ENCODE measurements at regions of chr6 and their contacts with region 1.

Region 1: DNA sequence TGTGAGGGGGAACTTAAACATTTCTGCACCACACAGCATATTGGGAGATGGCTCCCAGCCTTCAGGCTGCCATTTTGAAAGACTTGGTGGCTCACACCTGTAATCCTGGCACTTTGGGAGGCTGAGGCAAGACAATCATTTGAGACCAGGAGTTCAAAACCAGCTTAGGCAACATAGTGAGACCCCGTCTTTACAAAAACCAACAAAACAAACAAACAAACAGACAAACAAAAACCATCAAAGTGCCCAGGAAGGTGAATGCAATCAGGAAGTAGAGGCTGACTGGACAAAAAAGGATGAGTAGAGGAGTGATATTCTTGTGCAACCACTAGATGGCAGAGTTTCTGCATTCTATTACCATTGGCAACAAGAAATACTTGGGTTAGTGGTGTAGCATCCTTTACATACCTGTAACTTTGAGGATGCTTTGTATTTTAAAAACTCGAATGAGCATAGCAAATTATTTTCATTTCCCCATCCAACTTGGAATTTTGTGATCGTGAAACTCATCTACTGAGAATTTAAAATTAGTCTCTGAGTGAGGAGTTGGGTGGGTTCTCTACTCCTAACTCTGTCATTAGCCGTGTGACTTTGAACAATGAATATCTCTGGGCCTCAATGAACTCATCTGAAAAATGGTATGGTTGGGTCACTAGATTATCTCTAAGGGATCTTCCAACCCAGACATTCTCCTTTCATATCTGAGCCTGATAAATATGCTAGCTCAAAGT is 84.4 kb downstream of the CRYBG1 start:
- DNase-seq: peak; percentile 70
- ATAC-seq: no peak
- H3K4me3 ChIP-seq: no peak overlapping the region
- H3K27ac ChIP-seq: no peak overlapping the region
- H3K4me1 ChIP-seq: peaks cover 32% of the 10 kb centered on the region
- H3K27me3 ChIP-seq: no peaks in the 10 kb centered on the region
- CTCF ChIP-seq: peak; percentile 71

Region 2: GRCh38 chr6:105691081-105691480 is 753.9 kb before region 1 on chr6:
- CTCF ChIA-PET with region 1: no interaction called
- POLR2A ChIA-PET with region 1: no interaction called
- intact Hi-C with region 1: no loop called
- DNase-seq: no peak
- ATAC-seq: no peak
- H3K4me3 ChIP-seq: no peak overlapping the region
- H3K27ac ChIP-seq: no peak overlapping the region
- H3K4me1 ChIP-seq: no peaks in the 10 kb centered on the region
- H3K27me3 ChIP-seq: no peaks in the 10 kb centered on the region
- CTCF ChIP-seq: no peak

Region 3: GRCh38 chr6:105992315-105992961 is 452.5 kb before region 1 on chr6:
- CTCF ChIA-PET with region 1: no interaction called
- POLR2A ChIA-PET with region 1: no interaction called
- intact Hi-C with region 1: no loop called
- DNase-seq: peak; percentile 72
- ATAC-seq: peak; percentile 93
- H3K4me3 ChIP-seq: peak overlapping the region; percentile 85
- H3K27ac ChIP-seq: no peak overlapping the region
- H3K4me1 ChIP-seq: 0 out of 2 replicates have a peak, but pooled peaks cover 14% of the 10 kb centered on the region
- H3K27me3 ChIP-seq: no peaks in the 10 kb centered on the region
- CTCF ChIP-seq: no peak

Region 4: GRCh38 chr6:106360410-106360988 is 84.4 kb before region 1 on chr6 and contains the start of gene CRYBG1:
- CTCF ChIA-PET with region 1: interaction called, 5 read pairs
- POLR2A ChIA-PET with region 1: no interaction called
- intact Hi-C with region 1: loop called (anchors 1 kb)
- DNase-seq: peak; percentile 90
- ATAC-seq: peak; percentile 85
- H3K4me3 ChIP-seq: peak within 1 kb of the TSS; percentile 70
- H3K27ac ChIP-seq: peak within 1 kb of the TSS; percentile 42
- H3K4me1 ChIP-seq: peaks cover 20% of the 10 kb centered on the region
- H3K27me3 ChIP-seq: no peaks in the 10 kb centered on the region
- CTCF ChIP-seq: peak; percentile 82
- total RNA-seq, gene CRYBG1: 19.9 and 22.2 TPM in 2 replicates

Region 5: DNA sequence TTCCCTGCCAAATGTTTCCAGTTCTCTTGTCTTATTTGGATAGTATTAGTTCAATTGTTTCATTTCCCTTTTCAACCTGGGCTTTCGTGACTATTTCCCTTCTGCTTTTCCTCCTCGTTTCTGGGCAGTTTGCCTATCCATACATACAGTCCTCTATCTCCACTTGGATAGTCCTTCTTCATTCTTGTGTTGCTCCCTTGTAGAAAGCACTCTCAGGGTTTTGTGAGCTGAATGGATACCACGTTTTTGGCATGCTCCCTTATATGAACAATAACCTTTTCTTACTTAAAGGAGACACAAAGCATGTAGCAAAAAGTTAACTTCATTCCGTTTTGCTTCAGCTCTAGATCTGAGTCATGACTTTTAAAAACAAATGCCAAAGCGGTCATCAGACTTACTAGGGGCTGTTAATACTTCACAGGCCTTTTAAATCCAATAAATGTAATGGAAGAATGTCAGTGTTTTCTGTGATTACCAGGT is 67.8 kb before region 1 on chr6:
- CTCF ChIA-PET with region 1: interaction called, 4 read pairs
- POLR2A ChIA-PET with region 1: no interaction called
- intact Hi-C with region 1: loop called (anchors 1 kb)
- DNase-seq: peak; percentile 75
- ATAC-seq: peak; percentile 40
- H3K4me3 ChIP-seq: peak overlapping the region; percentile 38
- H3K27ac ChIP-seq: peak overlapping the region; percentile 64
- H3K4me1 ChIP-seq: peaks cover 52% of the 10 kb centered on the region
- H3K27me3 ChIP-seq: no peaks in the 10 kb centered on the region
- CTCF ChIP-seq: no peak

Region 6: DNA sequence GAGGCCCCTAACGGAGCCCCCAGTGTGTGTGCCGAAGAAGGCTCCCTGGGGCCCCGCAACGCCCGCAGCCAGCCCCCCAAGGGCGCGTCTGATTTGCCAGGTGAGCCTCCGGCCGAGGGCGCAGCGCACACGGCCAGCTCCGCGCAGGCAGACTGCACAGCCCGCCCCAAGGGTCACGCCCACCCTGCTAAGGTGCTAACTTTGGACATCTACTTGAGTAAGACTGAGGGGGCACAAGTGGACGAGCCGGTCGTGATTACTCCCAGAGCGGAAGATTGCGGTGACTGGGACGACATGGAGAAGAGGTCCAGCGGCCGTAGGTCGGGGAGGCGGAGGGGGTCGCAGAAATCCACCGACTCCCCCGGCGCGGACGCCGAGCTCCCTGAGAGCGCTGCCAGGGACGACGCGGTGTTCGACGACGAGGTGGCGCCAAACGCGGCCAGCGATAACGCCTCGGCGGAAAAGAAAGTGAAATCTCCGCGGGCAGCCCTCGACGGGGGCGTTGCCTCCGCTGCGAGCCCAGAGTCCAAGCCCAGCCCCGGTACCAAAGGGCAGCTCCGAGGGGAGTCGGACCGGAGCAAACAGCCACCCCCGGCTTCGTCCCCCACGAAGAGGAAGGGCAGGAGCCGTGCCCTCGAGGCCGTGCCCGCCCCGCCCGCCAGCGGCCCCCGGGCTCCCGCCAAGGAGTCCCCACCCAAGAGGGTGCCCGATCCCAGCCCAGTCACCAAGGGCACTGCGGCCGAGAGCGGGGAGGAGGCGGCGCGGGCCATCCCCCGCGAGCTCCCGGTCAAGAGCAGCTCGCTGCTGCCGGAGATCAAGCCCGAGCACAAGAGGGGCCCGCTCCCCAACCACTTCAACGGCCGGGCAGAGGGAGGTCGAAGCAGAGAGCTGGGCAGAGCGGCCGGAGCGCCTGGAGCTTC is 67.4 kb after region 1 on chr6:
- CTCF ChIA-PET with region 1: interaction called, 6 read pairs
- POLR2A ChIA-PET with region 1: no interaction called
- intact Hi-C with region 1: loop called (anchors 2 kb)
- DNase-seq: peak; percentile 58
- ATAC-seq: peak; percentile 33
- H3K4me3 ChIP-seq: peak overlapping the region; percentile 87
- H3K27ac ChIP-seq: peak overlapping the region; percentile 84
- H3K4me1 ChIP-seq: peaks cover 35% of the 10 kb centered on the region
- H3K27me3 ChIP-seq: no peaks in the 10 kb centered on the region
- CTCF ChIP-seq: peak; percentile 22; the same call in 1 of the 2 replicates

Region 7: GRCh38 chr6:106556368-106556960 is 111.5 kb after region 1 on chr6:
- CTCF ChIA-PET with region 1: no interaction called
- POLR2A ChIA-PET with region 1: no interaction called
- intact Hi-C with region 1: loop called (anchors 1 kb)
- DNase-seq: peak; percentile 60
- ATAC-seq: peak; percentile 57
- H3K4me3 ChIP-seq: no peak overlapping the region
- H3K27ac ChIP-seq: no peak overlapping the region
- H3K4me1 ChIP-seq: peaks cover 9% of the 10 kb centered on the region; the same call in 1 of the 2 replicates
- H3K27me3 ChIP-seq: no peaks in the 10 kb centered on the region
- CTCF ChIP-seq: peak; percentile 68

Region 8: GRCh38 chr6:106692112-106692818 is 247.3 kb after region 1 on chr6:
- CTCF ChIA-PET with region 1: no interaction called
- POLR2A ChIA-PET with region 1: no interaction called
- intact Hi-C with region 1: loop called (anchors 5 kb)
- DNase-seq: peak; percentile 53
- ATAC-seq: peak; percentile 86
- H3K4me3 ChIP-seq: no peak overlapping the region
- H3K27ac ChIP-seq: no peak overlapping the region
- H3K4me1 ChIP-seq: peaks cover 25% of the 10 kb centered on the region
- H3K27me3 ChIP-seq: no peaks in the 10 kb centered on the region
- CTCF ChIP-seq: no peak